Activated naive CD4-positive, alpha-beta T cell treated with anti-CD3 and anti-CD28 coated beads for 36 hours (primary cell): ENCODE measurements at regions of chr11 and their contacts with region 1.

Region 1: DNA sequence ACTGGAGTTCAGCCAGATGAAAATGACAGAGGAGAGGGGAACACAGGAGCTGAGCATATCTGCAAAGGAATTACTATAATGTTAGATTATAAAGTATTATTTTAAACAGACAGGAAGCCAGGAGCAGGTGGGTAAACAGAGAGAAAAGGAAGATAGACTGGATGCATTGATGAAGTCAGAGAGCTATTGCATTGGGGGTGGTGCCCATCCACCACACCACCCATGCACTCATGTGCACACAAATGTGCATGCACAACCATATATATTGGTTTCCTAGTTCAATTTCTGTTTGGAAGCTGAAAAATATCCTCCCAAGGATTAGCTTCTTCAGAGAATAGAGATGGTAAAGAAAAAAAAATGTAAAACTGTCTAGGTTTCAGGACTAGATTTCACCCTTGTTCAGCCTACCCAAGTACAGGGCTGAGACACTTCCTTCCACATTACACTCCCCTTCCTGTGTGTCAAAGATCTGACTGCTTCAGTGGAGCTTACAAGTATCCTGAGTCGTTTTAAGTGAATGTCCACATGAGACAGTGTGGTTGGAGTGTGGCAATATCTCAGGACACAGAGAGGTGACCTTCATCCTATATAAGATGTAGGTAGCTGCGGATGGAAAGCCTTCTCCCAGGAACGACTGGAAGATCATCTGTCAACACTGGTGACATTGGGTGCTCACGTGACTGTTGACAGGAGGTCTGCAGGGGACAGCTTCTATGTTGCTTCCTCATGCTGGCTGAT is 12.2 kb upstream of the SMPD1 start:
- DNase-seq: no peak
- H3K4me3 Mint-ChIP-seq: no peak overlapping the region
- H3K27ac Mint-ChIP-seq: peak overlapping the region; percentile 59
- H3K4me1 Mint-ChIP-seq: peaks cover 27% of the 10 kb centered on the region
- H3K27me3 Mint-ChIP-seq: no peaks in the 10 kb centered on the region

Region 2: DNA sequence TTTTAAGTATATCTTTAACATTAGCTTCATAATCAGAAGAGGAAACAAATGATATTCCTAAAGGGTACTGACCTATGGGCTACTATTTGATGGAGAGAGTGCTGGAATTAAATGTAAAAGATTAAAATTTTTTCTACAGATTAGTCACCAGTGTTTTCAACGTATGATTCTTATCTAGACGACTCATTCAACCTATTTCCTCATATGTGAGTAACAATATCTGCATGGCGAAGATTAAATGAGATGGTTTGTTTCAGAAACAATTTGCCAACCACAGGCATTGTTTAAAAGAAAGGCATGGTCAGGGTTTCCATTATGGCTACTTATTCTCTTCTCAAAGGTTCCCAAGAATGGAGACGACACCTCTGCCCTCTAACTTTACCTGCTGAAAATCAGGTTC is 250.2 kb before region 1 on chr11:
- CTCF ChIA-PET with region 1: no interaction called
- intact Hi-C with region 1: no loop called
- DNase-seq: no peak
- H3K4me3 Mint-ChIP-seq: no peak overlapping the region
- H3K27ac Mint-ChIP-seq: no peak overlapping the region
- H3K4me1 Mint-ChIP-seq: no peaks in the 10 kb centered on the region
- H3K27me3 Mint-ChIP-seq: no peaks in the 10 kb centered on the region

Region 3: GRCh38 chr11:6362873-6363678 is 15.0 kb before region 1 on chr11:
- CTCF ChIA-PET with region 1: interaction called, 56 read pairs
- intact Hi-C with region 1: no loop called
- DNase-seq: peak; percentile 86
- H3K4me3 Mint-ChIP-seq: no peak overlapping the region
- H3K27ac Mint-ChIP-seq: no peak overlapping the region
- H3K4me1 Mint-ChIP-seq: no peaks in the 10 kb centered on the region
- H3K27me3 Mint-ChIP-seq: no peaks in the 10 kb centered on the region

Region 4: DNA sequence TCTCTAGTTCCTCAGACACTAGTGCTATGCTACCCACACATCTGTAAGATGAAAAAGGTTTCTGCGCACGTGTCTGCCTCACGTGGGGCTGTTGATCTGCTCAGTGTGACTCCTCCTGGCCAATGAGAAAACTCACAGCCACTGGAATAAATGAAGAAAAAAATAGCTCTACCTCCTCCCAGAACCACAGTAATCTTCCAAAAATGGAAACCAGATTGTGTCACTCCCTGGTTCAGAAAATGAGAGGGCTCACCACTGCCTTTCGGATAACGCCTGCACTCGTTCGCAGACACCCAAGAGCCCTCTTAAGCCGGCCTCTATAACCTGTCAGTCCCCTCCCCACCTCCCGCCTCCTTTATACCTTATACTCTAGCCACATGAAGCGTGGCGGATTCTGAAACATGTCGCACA is 35.7 kb after region 1 on chr11:
- CTCF ChIA-PET with region 1: interaction called, 33 read pairs
- intact Hi-C with region 1: no loop called
- DNase-seq: peak; percentile 93
- H3K4me3 Mint-ChIP-seq: no peak overlapping the region
- H3K27ac Mint-ChIP-seq: no peak overlapping the region
- H3K4me1 Mint-ChIP-seq: peaks cover 38% of the 10 kb centered on the region
- H3K27me3 Mint-ChIP-seq: no peaks in the 10 kb centered on the region

Region 5: GRCh38 chr11:6443269-6444003 is 65.4 kb after region 1 on chr11:
- CTCF ChIA-PET with region 1: interaction called, 736 read pairs
- intact Hi-C with region 1: loop called (anchors 1 kb)
- DNase-seq: peak; percentile 69
- H3K4me3 Mint-ChIP-seq: no peak overlapping the region
- H3K27ac Mint-ChIP-seq: no peak overlapping the region
- H3K4me1 Mint-ChIP-seq: no peaks in the 10 kb centered on the region
- H3K27me3 Mint-ChIP-seq: no peaks in the 10 kb centered on the region

Region 6: DNA sequence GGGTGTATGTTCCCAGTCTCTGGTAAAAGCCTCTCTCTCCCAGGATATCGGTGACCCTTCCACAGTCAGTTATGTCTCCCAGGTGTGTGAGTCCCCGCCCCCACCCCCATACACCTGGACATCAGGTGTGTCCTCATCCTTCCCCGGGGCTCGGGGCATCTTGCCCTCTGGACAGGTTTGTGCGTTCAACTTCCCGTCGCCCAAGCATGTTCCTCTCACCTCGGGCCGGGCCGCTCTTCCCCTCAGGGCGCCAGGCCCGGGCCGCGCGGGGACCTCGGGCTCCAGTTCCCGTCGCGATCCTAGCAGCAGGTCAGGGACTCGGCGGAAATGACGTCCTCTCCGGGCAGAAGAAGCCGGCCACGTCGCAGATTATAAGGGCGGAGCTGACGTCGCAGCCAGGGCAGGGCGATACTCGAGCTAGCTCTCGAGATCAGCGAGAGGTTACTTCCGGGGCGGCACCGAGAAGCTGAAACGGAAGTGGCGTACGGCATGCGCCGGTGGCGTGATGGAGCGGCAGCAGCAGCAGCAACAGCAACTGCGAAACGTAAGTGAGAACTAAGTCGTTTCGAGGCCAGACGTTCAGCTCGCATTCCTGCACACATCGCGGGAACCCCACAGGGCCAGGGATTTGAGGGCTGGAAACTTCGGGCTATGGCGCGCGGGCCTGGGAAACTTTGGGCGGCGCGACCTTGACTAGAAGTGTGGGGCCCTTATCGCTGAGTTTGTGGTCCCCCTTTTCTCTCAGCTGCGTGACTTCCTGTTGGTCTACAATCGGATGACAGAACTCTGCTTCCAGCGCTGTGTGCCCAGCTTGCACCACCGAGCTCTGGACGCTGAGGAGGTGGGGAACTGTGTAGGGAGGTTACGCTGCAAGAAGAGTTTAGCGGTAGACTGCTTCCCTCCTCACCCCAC is 103.2 kb after region 1 on chr11 and contains the starts of genes ARFIP2 and TIMM10B:
- CTCF ChIA-PET with region 1: interaction called, 37 read pairs
- intact Hi-C with region 1: loop called (anchors 1 kb)
- DNase-seq: peak; percentile 99
- H3K4me3 Mint-ChIP-seq: peak within 1 kb of the TSS; percentile 94
- H3K27ac Mint-ChIP-seq: peak within 1 kb of the TSS; percentile 96
- H3K4me1 Mint-ChIP-seq: peaks cover 38% of the 10 kb centered on the region
- H3K27me3 Mint-ChIP-seq: no peaks in the 10 kb centered on the region
- total RNA-seq, gene ARFIP2: 33.5 to 37.9 TPM
- total RNA-seq, gene TIMM10B: 35.1 to 41.7 TPM

Region 7: DNA sequence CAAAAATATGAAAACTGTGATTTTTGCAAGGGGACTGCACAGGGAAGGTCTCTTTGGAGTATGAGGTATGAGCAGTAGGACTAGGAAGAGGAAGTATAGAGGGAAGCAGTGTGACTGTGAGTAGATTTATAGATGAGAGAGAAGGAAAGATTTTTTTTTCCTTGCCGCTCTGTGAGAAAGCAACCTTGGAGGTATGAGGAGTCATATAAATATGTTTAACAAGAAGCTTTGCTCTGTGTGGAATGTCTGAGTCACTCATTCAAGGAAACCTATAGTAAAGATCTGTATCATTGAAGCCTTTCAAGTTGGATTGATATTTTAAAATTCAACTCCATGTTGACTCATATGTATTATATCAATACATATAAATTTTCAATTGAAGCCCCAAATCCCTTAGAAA is 145.2 kb after region 1 on chr11:
- CTCF ChIA-PET with region 1: interaction called, 10 read pairs
- intact Hi-C with region 1: loop called (anchors 5 kb)
- DNase-seq: no peak
- H3K4me3 Mint-ChIP-seq: no peak overlapping the region
- H3K27ac Mint-ChIP-seq: peak overlapping the region; percentile 48
- H3K4me1 Mint-ChIP-seq: peaks cover 46% of the 10 kb centered on the region
- H3K27me3 Mint-ChIP-seq: no peaks in the 10 kb centered on the region

Region 8: GRCh38 chr11:6596239-6596877 is 218.3 kb after region 1 on chr11:
- CTCF ChIA-PET with region 1: no interaction called
- intact Hi-C with region 1: no loop called
- DNase-seq: no peak
- H3K4me3 Mint-ChIP-seq: no peak overlapping the region
- H3K27ac Mint-ChIP-seq: no peak overlapping the region
- H3K4me1 Mint-ChIP-seq: peaks cover 39% of the 10 kb centered on the region
- H3K27me3 Mint-ChIP-seq: no peaks in the 10 kb centered on the region

Region 9: GRCh38 chr11:6705905-6706535 is 327.9 kb after region 1 on chr11:
- CTCF ChIA-PET with region 1: interaction called, 21 read pairs
- intact Hi-C with region 1: loop called (anchors 1 kb)
- DNase-seq: peak; percentile 66
- H3K4me3 Mint-ChIP-seq: no peak overlapping the region
- H3K27ac Mint-ChIP-seq: no peak overlapping the region
- H3K4me1 Mint-ChIP-seq: peaks cover 17% of the 10 kb centered on the region
- H3K27me3 Mint-ChIP-seq: no peaks in the 10 kb centered on the region